Left colon (tissue), 2 donors: ENCODE measurements at regions of chr1 and their contacts with region 1.

Region 1: DNA sequence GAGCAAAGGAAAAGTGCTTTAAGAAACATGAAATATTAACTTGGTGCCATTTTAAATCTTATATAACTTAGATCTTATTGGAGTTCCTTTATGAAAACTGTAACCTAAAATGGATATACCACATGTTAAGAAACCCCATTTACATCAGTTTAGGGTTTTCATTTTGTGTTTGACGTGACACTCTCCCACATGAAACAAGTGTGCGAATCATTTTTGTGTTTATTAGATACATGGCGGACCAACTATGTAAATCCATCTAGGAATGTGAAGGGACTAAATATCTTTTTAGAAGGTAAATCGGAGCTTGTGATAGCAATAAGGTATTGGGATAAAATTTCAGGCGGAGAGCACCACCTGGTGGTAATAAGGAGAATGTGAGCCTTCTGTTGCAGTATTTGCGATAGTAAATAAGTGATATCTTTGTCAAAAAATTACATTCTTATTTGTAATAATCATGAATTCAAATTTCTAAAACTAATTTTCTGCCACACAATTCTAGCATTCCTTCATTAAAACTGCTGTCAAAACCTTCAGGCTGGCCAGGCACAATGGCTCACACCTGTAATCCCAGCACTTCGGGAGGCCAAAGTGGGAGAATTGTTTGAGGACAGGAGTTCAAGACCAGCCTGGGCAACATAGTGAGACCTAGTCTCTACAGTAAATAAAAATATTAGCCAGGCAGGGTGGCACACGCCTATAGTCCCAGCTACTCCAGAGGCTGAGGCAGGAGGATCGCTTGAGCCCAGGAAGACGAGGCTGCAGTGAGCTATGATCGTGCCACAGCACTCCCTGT is 31.3 kb downstream of the SMAP2 start:
- DNase-seq: no peak
- ATAC-seq: peak; percentile 62

Region 2: GRCh38 chr1:40344597-40344996 is 60.3 kb before region 1 on chr1:
- intact Hi-C with region 1: loop called in 1 of 2 experiments (anchors 10 kb)
- DNase-seq: peak; percentile 35 to 44
- ATAC-seq: peak; percentile 56